ENCODE measurements at regions of chr9 and their contacts with region 1.

Region 1: DNA sequence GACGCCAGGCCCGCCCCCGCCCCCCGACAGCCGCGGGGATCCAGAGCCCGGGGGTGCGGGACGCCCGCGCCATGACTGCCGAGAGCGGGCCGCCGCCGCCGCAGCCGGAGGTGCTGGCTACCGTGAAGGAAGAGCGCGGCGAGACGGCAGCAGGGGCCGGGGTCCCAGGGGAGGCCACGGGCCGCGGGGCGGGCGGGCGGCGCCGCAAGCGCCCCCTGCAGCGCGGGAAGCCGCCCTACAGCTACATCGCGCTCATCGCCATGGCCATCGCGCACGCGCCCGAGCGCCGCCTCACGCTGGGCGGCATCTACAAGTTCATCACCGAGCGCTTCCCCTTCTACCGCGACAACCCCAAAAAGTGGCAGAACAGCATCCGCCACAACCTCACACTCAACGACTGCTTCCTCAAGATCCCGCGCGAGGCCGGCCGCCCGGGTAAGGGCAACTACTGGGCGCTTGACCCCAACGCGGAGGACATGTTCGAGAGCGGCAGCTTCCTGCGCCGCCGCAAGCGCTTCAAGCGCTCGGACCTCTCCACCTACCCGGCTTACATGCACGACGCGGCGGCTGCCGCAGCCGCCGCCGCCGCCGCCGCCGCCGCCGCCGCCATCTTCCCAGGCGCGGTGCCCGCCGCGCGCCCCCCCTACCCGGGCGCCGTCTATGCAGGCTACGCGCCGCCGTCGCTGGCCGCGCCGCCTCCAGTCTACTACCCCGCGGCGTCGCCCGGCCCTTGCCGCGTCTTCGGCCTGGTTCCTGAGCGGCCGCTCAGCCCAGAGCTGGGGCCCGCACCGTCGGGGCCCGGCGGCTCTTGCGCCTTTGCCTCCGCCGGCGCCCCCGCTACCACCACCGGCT is 1.0 kb downstream of the FOXE1 start:
- DNase-seq: peak; percentile 78
- H3K4me3 Mint-ChIP-seq: peak overlapping the region; percentile 87
- H3K27ac Mint-ChIP-seq: peak overlapping the region; percentile 16
- H3K4me1 Mint-ChIP-seq: peaks cover 36% of the 10 kb centered on the region
- H3K27me3 Mint-ChIP-seq: peaks cover 74% of the 10 kb centered on the region

Region 2: GRCh38 chr9:97411789-97412625 is 442.1 kb before region 1 on chr9 and contains the start of gene TDRD7:
- CTCF ChIA-PET with region 1: no interaction called
- intact Hi-C with region 1: loop called (anchors 5 kb)
- DNase-seq: peak; percentile 85
- H3K4me3 Mint-ChIP-seq: peak within 1 kb of the TSS; percentile 79
- H3K27ac Mint-ChIP-seq: peak within 1 kb of the TSS; percentile 44
- H3K4me1 Mint-ChIP-seq: peaks cover 13% of the 10 kb centered on the region
- H3K27me3 Mint-ChIP-seq: peaks cover 9% of the 10 kb centered on the region
- total RNA-seq, gene TDRD7: 6.9 to 7.4 TPM

Region 3: GRCh38 chr9:97602430-97602829 is 251.6 kb before region 1 on chr9:
- CTCF ChIA-PET with region 1: no interaction called
- intact Hi-C with region 1: no loop called
- DNase-seq: no peak
- H3K4me3 Mint-ChIP-seq: no peak overlapping the region
- H3K27ac Mint-ChIP-seq: no peak overlapping the region
- H3K4me1 Mint-ChIP-seq: peaks cover 4% of the 10 kb centered on the region
- H3K27me3 Mint-ChIP-seq: no peaks in the 10 kb centered on the region

Region 4: GRCh38 chr9:97666907-97667686 is 187.0 kb before region 1 on chr9:
- CTCF ChIA-PET with region 1: no interaction called
- intact Hi-C with region 1: no loop called
- DNase-seq: peak; percentile 8
- H3K4me3 Mint-ChIP-seq: no peak overlapping the region
- H3K27ac Mint-ChIP-seq: peak overlapping the region; percentile 73
- H3K4me1 Mint-ChIP-seq: peaks cover 39% of the 10 kb centered on the region
- H3K27me3 Mint-ChIP-seq: no peaks in the 10 kb centered on the region

Region 5: GRCh38 chr9:97740848-97741821 is 112.9 kb before region 1 on chr9:
- CTCF ChIA-PET with region 1: no interaction called
- intact Hi-C with region 1: loop called (anchors 10 kb)
- DNase-seq: peak; percentile 73
- H3K4me3 Mint-ChIP-seq: peak overlapping the region; percentile 65
- H3K27ac Mint-ChIP-seq: no peak overlapping the region
- H3K4me1 Mint-ChIP-seq: peaks cover 8% of the 10 kb centered on the region
- H3K27me3 Mint-ChIP-seq: peaks cover 57% of the 10 kb centered on the region

Region 6: DNA sequence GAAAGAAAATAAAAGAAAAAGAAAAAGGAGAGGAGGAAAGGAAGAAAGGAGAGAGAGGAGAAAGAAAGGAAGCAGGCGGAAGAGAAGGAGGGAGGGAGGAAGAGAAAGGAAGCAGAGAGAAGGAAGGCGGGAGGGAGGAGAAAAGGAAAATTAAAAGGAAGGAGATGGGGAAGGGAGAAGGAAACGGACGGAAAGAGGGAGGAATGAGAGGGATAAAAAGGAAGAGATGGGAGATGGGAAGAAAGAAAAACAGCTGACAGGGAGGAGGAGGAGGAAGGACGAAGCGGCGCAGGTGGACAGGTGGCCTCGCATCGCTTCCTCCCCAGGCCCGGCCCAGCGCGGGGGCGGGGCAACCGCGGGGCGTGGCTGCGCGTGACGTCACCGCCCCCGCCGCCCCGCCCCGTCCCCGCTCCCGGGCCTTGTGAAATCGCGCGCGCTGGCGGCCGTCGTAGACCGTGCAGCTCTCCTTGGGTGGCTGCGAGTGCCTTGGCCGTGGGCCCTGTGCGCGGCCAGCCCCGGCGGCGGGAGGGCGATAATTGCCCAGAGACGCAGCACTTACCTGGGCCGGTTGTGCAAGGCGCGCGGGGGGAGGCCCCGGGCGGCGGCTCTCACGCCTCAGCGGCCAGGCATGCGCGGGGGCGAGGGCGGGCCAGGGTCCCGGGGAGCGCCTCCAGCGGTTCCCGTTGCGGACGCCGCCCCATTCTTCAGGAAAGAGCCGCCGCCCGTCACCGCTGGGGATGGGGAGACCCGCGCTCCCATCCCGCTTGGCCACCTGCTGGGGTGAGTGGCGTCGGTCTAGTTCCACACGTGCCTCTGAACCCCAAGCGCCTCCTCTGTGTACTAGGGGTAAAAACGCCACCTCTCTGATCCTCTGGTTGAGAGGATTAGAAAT is 50.7 kb before region 1 on chr9:
- CTCF ChIA-PET with region 1: no interaction called
- intact Hi-C with region 1: loop called (anchors 2 kb)
- DNase-seq: peak; percentile 72
- H3K4me3 Mint-ChIP-seq: peak overlapping the region; percentile 77
- H3K27ac Mint-ChIP-seq: no peak overlapping the region
- H3K4me1 Mint-ChIP-seq: peaks cover 8% of the 10 kb centered on the region
- H3K27me3 Mint-ChIP-seq: peaks cover 15% of the 10 kb centered on the region

Region 7: DNA sequence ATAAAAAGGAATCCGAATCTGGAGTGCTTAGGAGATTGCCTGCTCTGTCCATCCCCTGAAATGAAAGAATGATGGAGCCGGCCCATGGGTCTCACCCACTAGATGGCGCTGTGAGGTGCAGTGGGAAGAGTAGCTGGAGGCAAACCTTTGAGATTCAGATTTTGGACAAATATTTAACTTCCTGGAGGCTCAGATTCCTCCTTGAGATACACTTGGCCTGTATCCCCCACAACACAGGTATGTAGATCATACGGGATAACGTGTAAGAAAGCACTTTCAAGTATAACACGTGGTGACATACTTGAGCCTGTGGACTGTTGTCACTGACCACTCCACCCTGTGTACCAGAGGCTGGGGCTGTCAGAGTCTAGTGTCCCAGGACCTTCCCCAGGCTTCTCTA is 36.0 kb after region 1 on chr9:
- CTCF ChIA-PET with region 1: interaction called, 12 read pairs
- intact Hi-C with region 1: no loop called
- DNase-seq: peak; percentile 86
- H3K4me3 Mint-ChIP-seq: no peak overlapping the region
- H3K27ac Mint-ChIP-seq: no peak overlapping the region
- H3K4me1 Mint-ChIP-seq: peaks cover 16% of the 10 kb centered on the region
- H3K27me3 Mint-ChIP-seq: no peaks in the 10 kb centered on the region

Region 8: DNA sequence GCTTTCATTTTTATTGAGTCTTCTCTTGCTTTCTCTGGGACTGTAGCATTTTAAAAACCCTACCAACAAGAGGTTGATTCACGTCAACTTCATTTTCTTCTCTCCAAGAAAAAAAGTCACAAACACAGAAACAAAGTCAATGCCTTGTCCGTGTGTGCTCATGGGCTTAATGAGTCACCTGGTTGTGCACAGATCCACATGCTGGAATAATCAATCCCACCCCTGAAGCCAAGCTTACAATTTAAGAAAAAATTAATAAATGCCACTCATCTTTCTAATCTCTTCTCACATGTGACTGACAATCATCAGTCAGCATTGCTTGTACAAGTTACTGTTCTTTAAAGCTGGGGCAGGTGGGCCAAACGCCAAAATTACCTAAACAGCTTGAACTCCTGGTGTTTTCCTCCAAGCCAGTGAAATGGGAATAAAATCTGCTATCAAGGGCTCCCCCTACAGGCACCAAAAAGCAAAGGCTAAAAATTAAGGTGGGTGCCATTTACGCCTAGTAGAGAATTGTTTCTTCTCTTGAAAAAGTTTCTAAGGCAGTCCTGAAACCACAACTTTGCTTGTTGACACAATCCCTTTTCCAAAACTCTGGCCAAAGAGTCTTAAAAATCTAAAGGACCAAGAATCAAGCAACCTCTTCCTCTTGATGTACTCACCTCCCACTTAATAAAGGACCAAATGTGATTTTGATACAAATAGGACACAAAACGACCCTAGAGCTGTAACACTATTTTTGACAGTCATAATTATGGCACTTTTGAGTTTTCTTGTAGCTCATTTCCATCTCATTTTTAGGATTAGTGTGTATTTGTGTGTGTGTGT is 46.9 kb after region 1 on chr9:
- CTCF ChIA-PET with region 1: interaction called, 8 read pairs
- intact Hi-C with region 1: loop called (anchors 5 kb)
- DNase-seq: peak; percentile 52
- H3K4me3 Mint-ChIP-seq: no peak overlapping the region
- H3K27ac Mint-ChIP-seq: no peak overlapping the region
- H3K4me1 Mint-ChIP-seq: peaks cover 59% of the 10 kb centered on the region
- H3K27me3 Mint-ChIP-seq: no peaks in the 10 kb centered on the region

Region 9: DNA sequence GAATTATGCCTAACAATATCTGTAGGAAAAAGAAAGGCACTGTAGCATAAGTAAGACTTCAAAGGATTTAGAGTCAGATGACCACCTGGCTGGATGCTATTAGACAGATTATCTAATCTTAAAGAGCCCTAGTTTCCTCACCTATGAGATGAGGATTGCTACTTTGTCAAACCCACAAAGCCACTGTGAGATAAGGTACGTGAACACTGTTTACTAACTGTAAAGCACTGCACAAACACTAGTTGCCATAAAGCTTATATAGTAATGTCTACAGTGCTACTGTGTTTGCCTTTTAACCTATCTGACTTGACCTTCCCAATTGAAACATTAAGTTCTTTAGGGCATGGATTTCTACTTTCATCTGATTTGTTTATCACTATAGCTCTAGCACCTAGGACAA is 57.9 kb after region 1 on chr9:
- CTCF ChIA-PET with region 1: no interaction called
- intact Hi-C with region 1: no loop called
- DNase-seq: no peak
- H3K4me3 Mint-ChIP-seq: no peak overlapping the region
- H3K27ac Mint-ChIP-seq: no peak overlapping the region
- H3K4me1 Mint-ChIP-seq: peaks cover 45% of the 10 kb centered on the region
- H3K27me3 Mint-ChIP-seq: no peaks in the 10 kb centered on the region